ENCODE measurements at regions of chr1 and their contacts with region 1.

Region 1: DNA sequence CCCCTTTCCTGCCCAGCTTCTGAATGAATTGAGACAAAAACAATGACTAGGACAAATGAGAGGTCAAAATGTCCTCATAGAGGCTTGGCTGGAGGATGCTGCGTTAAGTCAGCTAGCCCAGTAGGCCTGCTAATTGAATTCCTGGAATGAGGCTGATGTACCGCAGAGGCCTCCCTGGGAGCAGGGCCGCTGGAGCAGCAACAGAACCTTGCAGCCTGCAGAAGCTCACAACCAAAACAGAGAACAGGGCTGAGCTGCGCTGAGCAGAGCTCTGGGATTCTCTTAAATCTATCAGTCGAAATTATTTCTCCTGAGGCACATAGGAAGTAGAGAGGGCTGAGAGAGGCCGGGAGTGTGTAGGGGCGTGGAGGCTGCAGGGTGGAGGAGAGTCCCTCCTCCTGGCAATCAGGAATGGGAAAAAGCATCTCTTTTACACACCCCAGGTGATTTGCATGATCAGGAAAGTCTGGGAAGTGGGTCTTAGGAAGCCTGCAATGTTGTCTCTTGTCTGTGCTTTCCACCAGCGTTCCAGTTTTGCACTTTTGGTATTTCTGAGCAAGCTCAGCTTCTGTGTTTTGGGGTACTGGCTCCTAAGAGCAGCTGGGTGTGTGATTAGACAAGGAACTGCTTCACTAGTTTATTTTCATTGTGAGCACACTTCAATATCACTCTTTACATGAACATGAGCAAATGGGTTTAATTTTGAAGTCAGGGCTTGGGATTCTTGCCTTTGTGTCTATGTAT is 66.5 kb downstream of the RYR2 start:
- DNase-seq: no peak
- H3K4me3 ChIP-seq: no peak overlapping the region
- H3K27ac ChIP-seq: peak overlapping the region in 3 of 4 donors; percentile 16 to 64 (median 54)
- H3K4me1 ChIP-seq: peaks cover 0 to 43% (median 11%) of the 10 kb centered on the region in 4 donors
- H3K27me3 ChIP-seq: no peaks in the 10 kb centered on the region
- CTCF ChIP-seq: no peak
- EP300 ChIP-seq: no peak
- POLR2A ChIP-seq: no peak

Region 2: GRCh38 chr1:236854602-236854978 is 253.9 kb before region 1 on chr1:
- intact Hi-C with region 1: no loop called
- DNase-seq: no peak
- H3K4me3 ChIP-seq: no peak overlapping the region
- H3K27ac ChIP-seq: peak overlapping the region in 2 of 4 donors; percentile 0 to 57
- H3K4me1 ChIP-seq: peaks cover 0 to 23% (median 8%) of the 10 kb centered on the region in 4 donors
- H3K27me3 ChIP-seq: no peaks in the 10 kb centered on the region
- CTCF ChIP-seq: no peak
- EP300 ChIP-seq: no peak
- POLR2A ChIP-seq: no peak

Region 3: GRCh38 chr1:237154157-237154556 is 45.7 kb after region 1 on chr1:
- intact Hi-C with region 1: loop called (anchors 10 kb)
- DNase-seq: no peak
- H3K4me3 ChIP-seq: no peak overlapping the region
- H3K27ac ChIP-seq: peak overlapping the region; percentile 6 to 46 (median 36)
- H3K4me1 ChIP-seq: peaks cover 0 to 45% (median 20%) of the 10 kb centered on the region in 4 donors
- H3K27me3 ChIP-seq: no peaks in the 10 kb centered on the region
- CTCF ChIP-seq: no peak
- EP300 ChIP-seq: no peak
- POLR2A ChIP-seq: no peak